ENCODE measurements at regions of chr2 and their contacts with region 1.

Region 1: GRCh38 chr2:196263181-196263747 is 91.9 kb upstream of the STK17B start:
- DNase-seq: peak; percentile 41
- H3K4me3 ChIP-seq: no peak overlapping the region
- H3K27me3 ChIP-seq: no peaks in the 10 kb centered on the region
- CTCF ChIP-seq: no peak

Region 2: DNA sequence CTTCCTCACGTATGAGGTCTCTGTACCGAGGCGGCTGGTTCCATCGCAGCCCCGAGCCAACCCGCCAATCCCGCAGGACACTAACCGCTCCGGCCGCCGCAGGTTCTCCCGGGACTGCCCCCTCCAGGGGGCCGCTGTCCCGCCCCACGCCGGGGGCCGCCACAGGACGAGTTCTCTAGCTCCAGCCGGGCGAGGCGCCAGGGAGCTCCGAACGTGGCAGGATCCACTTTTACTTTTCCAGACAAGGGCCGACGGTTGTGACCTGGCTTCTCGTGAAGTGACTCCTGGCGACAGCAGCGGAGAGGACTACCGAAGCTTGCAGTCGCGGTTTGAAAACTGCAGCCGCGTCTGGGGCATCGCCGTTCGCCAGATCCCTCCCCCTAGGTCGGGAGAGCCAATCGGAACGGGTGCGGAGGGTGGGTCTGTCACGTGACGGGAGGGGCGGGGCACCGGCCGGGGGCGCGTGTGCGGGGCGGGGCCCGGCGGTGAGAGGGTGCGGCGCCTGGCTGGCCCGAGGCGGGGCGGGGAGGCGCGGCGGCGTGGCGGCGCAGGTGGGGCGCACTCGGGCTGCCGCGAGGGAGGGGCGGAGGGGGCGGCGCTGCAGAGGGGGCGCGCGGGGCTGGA is 91.9 kb before region 1 on chr2 and contains the start of gene STK17B:
- CTCF ChIA-PET with region 1: interaction called, 3 read pairs
- POLR2A ChIA-PET with region 1: interaction called, 15 read pairs
- DNase-seq: peak; percentile 42
- H3K4me3 ChIP-seq: peak within 1 kb of the TSS; percentile 92
- H3K27me3 ChIP-seq: no peaks in the 10 kb centered on the region
- CTCF ChIP-seq: peak; percentile 28; the same call in 1 of the 2 replicates
- polyA plus RNA-seq, gene STK17B: 6.1 and 15.6 TPM in 2 replicates

Region 3: DNA sequence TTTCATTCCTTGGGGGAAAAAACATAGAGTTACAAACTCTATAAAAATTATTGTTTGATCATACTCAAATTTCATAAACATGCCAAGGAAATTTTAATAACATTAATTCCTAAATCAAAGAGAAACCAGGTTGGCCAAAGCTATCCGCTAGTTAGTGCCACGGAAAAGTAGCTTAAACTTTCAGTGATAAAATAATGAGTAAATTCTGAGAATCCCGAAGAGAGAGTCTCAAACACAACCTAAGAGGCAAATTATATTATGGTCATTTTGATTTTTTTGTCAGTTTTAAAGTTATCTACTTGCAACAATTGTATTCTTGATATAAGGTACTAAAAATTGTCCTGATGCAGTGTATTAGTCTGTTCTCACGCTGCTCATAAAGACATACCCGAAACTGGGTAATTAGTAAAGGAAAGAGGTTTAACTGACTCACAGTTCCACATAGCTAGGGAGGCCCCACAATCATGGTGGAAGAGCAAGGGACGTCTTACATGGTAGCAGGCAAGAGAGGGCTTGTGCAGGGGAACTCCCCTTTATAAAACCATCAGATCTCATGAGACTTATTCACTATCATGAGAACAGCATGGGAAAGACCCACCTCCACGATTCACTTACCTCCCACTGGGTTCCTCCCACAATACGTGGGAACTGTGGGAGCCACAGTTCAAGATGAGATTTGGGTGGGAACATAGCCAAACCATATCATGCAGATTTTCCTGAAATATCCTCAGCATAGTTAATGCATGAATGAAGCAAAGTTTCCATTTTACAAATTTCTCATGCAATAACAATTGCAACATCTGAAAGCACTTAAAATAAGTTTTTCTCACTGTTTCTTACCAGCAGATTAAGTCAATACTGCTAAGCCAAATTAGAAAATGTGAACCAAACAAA is 114.0 kb after region 1 on chr2:
- CTCF ChIA-PET with region 1: no interaction called
- POLR2A ChIA-PET with region 1: no interaction called
- DNase-seq: peak; percentile 34
- H3K4me3 ChIP-seq: no peak overlapping the region
- H3K27me3 ChIP-seq: no peaks in the 10 kb centered on the region
- CTCF ChIP-seq: no peak